ENCODE measurements at regions of chr12 and their contacts with region 1.

Region 1: DNA sequence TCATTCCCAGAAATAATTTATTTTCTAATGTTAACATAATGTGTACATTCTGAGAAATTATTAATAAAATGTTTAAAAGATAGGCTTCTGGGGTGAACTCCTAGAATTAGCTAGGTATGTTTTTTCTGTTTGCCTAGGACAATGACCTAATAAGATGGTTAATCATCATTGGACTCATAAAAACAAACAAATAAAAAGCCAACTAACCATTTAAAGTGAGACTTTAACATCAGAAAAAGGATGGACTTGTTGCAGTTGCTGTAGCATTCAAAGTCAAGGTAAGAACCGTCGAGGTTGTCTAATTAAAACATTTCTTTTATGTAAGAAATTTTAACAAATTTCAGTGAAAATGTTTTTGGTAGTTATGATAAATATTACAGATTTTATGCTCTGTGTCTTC is at the start of gene SLCO1B3:
- DNase-seq: peak; percentile 59
- ATAC-seq: peak; percentile 60
- H3K4me3 ChIP-seq: no peak within 1 kb of the TSS
- H3K27ac ChIP-seq: peak within 1 kb of the TSS; percentile 68
- H3K4me1 ChIP-seq: peaks cover 25% of the 10 kb centered on the region
- H3K27me3 ChIP-seq: no peaks in the 10 kb centered on the region
- CTCF ChIP-seq: no peak
- total RNA-seq, gene SLCO1B3: 13.2 and 14.2 TPM in 2 replicates

Region 2: DNA sequence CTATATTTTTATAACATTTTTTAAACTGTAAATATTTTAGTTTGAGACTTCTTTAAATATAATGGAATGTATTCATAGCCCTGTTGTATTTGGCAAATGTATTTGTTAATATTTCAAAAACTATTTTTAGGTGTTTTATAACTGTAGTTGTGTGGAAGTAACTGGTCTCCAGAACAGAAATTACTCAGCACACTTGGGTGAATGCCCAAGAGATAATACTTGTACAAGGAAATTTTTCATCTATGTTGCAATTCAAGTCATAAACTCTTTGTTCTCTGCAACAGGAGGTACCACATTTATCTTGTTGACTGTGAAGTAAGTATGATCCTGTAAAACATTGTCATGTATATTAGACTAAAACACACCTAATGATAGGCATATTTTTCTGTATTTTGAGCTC is 72.8 kb after region 1 on chr12:
- CTCF ChIA-PET with region 1: no interaction called
- POLR2A ChIA-PET with region 1: no interaction called
- intact Hi-C with region 1: loop called (anchors 5 kb)
- DNase-seq: peak; percentile 67
- ATAC-seq: peak; percentile 74
- H3K4me3 ChIP-seq: no peak overlapping the region
- H3K27ac ChIP-seq: no peak overlapping the region
- H3K4me1 ChIP-seq: peaks cover 5% of the 10 kb centered on the region
- H3K27me3 ChIP-seq: no peaks in the 10 kb centered on the region
- CTCF ChIP-seq: no peak